Cardiac septum (tissue), 1 donor: ENCODE measurements at regions of chr20 and their contacts with region 1.

Region 1: GRCh38 chr20:50224531-50225255 is 34.1 kb downstream of the CEBPB start:
- DNase-seq: peak; percentile 82

Region 2: DNA sequence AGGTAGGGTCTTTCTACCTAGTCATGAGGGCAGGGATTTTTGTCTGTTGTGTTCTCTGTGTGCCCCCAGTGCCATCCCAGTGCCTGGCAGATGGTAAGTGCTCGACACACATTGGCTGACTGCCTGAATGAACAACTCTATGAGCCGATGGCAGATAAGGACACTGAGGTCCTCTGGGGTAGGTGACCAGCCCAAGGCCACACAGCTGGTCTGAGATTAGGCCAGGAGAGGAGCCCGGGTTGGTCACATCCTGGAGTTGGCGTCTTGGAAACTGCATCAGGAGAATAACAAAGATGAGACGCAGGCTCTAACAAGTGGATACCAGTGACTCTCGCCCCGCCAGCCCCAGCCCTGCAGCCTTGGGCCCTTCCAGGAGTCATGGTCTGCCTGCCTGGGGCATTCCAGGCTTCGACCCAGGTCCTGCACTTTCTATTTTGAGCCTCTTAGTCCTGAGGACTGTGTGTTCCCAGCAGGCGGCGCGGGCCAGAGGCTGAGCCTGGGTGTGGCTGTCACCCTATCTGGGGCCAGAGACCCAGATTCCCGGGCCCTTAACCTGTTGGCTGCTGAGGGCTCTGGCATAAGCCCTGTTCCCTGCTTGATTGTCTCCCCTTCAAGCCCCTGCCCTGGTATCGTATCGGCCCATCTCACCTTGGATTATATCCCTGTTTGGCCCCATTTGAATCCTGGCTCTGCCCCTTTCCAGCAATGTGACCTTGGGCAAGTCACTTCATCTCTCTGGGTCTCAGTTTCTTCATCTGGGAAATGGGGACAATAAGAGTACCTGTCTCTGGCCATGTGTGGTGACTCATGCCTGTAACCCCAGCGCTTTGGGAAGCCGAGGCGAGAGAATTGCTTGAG is 54.2 kb after region 1 on chr20:
- intact Hi-C with region 1: loop called (anchors 5 kb)
- DNase-seq: no peak

Region 3: DNA sequence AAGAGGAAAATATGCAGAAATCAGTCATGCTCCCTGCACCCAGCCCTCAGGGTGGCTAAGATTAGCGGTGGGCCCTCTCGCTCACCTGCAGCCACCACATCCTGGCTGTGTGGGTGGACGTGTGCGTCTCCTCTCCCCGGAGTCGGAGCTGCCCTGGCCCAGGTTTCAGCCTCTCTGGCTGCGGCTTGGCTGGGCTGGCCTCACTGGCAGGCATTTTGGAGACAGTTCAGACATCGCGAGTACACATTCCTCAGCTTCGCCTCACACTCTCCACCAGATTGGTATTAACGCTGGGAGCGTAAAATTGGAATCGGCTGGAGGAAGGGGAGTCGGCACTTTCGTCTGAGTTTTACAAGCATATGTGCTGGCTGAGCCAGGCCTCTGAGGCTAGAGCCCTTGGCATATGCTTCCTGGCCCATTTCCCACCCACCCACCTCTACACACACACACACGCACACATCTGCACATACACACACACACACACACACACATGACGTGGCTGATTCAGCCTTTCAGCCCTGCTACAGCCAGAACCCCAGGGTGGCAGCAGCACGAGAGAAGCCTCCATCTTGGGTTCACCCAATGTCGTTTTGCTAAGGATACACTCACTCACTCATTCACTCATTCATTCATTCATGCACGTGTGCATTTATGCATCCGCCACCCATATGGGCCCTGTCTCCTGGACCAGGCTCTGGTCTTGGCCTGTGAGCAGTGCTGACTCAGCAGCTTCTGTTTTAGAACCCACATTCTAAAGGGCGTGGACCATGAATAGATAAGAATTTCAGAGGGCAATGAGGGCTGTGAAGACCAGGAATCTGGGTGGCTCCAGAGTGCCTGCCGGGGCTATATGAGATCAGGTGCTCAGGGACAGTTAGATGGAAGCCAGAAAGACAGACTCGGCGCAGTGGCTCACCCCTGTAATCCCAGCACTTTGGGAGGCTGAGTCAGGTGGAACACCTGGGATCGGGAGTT is 613.1 kb after region 1 on chr20:
- intact Hi-C with region 1: no loop called
- DNase-seq: no peak